ENCODE measurements at regions of chr22 and their contacts with region 1.

Region 1: GRCh38 chr22:38114484-38115398 is 4.3 kb upstream of the BAIAP2L2 start:
- DNase-seq: peak; percentile 77
- H3K4me3 ChIP-seq: no peak overlapping the region
- H3K27ac ChIP-seq: no peak overlapping the region
- H3K4me1 ChIP-seq: no peaks in the 10 kb centered on the region
- H3K27me3 ChIP-seq: no peaks in the 10 kb centered on the region
- CTCF ChIP-seq: peak; percentile 96 to 99
- POLR2A ChIP-seq: no peak

Region 2: GRCh38 chr22:38097557-38098409 is 17.0 kb before region 1 on chr22:
- CTCF ChIA-PET with region 1: interaction called, 25 read pairs
- POLR2A ChIA-PET with region 1: no interaction called
- dilution Hi-C with region 1: no loop called
- intact Hi-C with region 1: no loop called
- DNase-seq: peak; percentile 12
- H3K4me3 ChIP-seq: no peak overlapping the region
- H3K27ac ChIP-seq: no peak overlapping the region
- H3K4me1 ChIP-seq: peaks cover 10% of the 10 kb centered on the region
- H3K27me3 ChIP-seq: peaks cover 0 to 3% of the 10 kb centered on the region in 2 experiments
- CTCF ChIP-seq: peak; percentile 36 to 60
- POLR2A ChIP-seq: no peak

Region 3: GRCh38 chr22:38136584-38136983 is 21.8 kb after region 1 on chr22:
- CTCF ChIA-PET with region 1: interaction called, 23 read pairs
- POLR2A ChIA-PET with region 1: no interaction called
- dilution Hi-C with region 1: no loop called
- intact Hi-C with region 1: no loop called
- DNase-seq: no peak
- H3K4me3 ChIP-seq: no peak overlapping the region
- H3K27ac ChIP-seq: no peak overlapping the region
- H3K4me1 ChIP-seq: peaks cover 7% of the 10 kb centered on the region
- H3K27me3 ChIP-seq: no peaks in the 10 kb centered on the region
- CTCF ChIP-seq: no peak
- POLR2A ChIP-seq: no peak

Region 4: DNA sequence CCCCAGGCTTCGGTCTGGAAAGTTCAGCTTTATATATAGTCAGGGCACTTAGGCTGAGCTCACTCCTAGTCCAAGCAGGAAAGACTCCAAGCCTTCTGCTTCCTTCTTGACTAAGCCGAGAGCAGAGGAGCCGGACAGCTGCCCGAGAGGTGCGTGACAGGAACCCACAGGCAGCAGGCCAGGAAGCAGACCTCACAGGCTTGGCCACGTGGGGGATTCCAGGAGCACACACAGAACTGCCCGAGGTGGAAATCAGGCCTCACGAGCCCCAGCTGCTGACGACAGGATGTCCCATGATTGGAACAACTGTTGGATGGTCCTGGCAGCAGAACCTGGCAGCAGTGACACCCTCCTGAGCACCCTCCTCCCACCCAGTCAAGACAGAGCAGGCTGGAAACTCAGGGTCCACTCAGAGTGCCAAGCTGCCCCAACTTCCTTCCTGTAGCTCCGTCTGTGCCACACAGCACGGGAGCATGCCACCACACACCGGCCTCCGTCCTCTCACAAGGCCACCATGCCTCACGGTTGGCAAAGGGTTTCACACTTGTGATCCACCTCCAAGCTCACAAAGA is 61.5 kb after region 1 on chr22:
- CTCF ChIA-PET with region 1: interaction called, 22 read pairs
- POLR2A ChIA-PET with region 1: interaction called, 11 read pairs
- dilution Hi-C with region 1: no loop called
- intact Hi-C with region 1: loop called (anchors 2 kb)
- DNase-seq: peak; percentile 99
- H3K4me3 ChIP-seq: no peak overlapping the region
- H3K27ac ChIP-seq: peak overlapping the region; percentile 99
- H3K4me1 ChIP-seq: peaks cover 69% of the 10 kb centered on the region
- H3K27me3 ChIP-seq: no peaks in the 10 kb centered on the region
- CTCF ChIP-seq: no peak
- POLR2A ChIP-seq: no peak

Region 5: DNA sequence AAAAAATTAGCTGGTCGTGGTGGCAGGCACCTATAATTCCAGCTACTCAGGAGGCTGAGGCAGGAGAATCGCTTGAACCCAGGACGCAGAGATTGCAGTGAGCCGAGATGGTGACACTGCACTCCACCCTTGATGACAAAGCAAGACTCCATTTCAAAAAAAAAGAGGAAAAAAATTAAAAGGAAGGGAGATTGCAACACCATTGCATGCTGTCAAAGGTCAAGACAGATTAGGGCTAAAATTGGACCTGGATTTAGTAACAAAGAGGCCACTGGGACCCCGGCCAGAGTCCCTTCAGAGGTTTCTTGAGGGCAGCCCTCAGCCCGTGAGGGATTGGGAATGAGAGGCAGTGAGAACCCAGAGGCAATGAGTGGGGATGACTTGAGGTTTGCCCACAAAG is 78.8 kb after region 1 on chr22:
- CTCF ChIA-PET with region 1: interaction called, 13 read pairs
- POLR2A ChIA-PET with region 1: no interaction called
- dilution Hi-C with region 1: no loop called
- intact Hi-C with region 1: no loop called
- DNase-seq: no peak
- H3K4me3 ChIP-seq: no peak overlapping the region
- H3K27ac ChIP-seq: no peak overlapping the region
- H3K4me1 ChIP-seq: no peaks in the 10 kb centered on the region
- H3K27me3 ChIP-seq: no peaks in the 10 kb centered on the region
- CTCF ChIP-seq: no peak
- POLR2A ChIP-seq: no peak

Region 6: GRCh38 chr22:38214256-38215056 is 99.7 kb after region 1 on chr22:
- CTCF ChIA-PET with region 1: interaction called, 16 read pairs
- POLR2A ChIA-PET with region 1: no interaction called
- dilution Hi-C with region 1: no loop called
- intact Hi-C with region 1: loop called (anchors 2 kb)
- DNase-seq: peak; percentile 50
- H3K4me3 ChIP-seq: no peak overlapping the region
- H3K27ac ChIP-seq: no peak overlapping the region
- H3K4me1 ChIP-seq: peaks cover 27% of the 10 kb centered on the region
- H3K27me3 ChIP-seq: no peaks in the 10 kb centered on the region
- CTCF ChIP-seq: no peak
- POLR2A ChIP-seq: no peak

Measured in endothelial cell of umbilical vein (primary cell).